Activated T-helper 1 cell treated with anti-CD3 and anti-CD28 coated beads, Interleukin-12 subunit alpha, Interleukin-12 subunit beta, Interleukin-2, Interleukin-4 antibody, amounts not matched to agents 30 ng/mL and 10 ng/mL and 1 ng/mL, durations not matched to agents 14 hours and 24 hours and 36 hours (primary cell): ENCODE measurements at regions of chr2 and their contacts with region 1.

Region 1: DNA sequence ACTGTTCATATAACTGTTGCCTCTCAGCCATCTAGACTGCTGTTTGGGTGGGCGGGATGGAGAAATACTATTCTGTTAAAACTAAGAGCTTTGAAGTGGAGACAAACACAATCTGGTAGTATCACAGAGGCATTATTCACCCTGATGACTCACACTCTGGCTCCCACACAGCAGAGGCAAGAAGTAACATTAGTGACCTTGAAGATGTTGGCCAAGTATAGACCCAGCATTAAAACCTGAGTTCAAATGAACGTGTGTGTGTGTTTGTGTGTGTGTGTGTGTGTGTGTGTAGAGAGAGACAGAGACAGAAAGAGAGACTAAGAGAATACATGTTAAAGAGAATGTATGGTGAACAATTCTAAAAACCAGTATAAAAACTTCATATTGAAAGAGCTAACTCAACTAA is 22.5 kb upstream of the ACVR1 start:
- DNase-seq: peak; percentile 43
- H3K4me3 Mint-ChIP-seq: peak overlapping the region; percentile 82
- H3K27ac Mint-ChIP-seq: peak overlapping the region; percentile 97
- H3K4me1 Mint-ChIP-seq: peaks cover 79% of the 10 kb centered on the region
- H3K27me3 Mint-ChIP-seq: no peaks in the 10 kb centered on the region

Region 2: DNA sequence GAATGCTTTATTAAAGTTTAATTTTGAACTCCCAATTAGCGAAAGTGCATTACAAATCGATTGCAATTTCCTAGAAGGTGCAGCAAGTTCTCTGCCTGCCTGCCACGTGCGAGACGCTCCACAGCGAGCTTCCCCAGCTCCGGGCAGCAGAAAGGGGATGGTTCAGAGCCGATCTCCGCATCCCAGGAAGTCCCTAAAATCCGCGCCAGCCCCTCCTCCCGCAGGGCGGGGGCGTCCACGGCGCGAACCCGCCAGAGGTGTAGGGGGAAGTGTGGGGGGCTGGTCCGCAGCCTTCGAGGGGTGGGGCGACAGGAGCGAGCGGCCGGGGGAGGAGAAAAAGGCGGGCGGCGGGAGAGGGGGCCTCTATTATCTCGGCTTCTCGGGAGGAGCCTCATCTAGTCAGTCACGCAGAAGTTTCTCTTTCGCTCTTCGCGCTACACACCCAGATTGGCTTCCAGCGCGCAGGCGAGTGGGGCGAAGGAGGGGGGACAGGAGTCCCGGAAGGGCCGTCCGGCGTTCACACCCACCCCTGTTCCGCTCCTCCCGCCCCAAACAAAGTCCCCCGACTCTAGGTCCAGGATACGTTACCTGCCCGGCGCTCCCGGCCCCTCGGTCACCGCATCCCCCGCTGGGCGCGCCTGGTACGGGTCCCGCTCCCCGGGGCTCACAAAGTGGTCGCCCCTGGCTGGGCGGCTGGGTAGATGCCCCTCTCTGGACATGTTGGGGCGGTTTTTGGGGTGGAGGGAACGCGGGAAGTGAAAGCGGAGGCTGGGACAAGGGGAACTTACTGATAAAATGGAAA is 1556.9 kb before region 1 on chr2:
- intact Hi-C with region 1: loop called (anchors 2 kb)
- DNase-seq: peak; percentile 85
- H3K4me3 Mint-ChIP-seq: peak overlapping the region; percentile 96
- H3K27ac Mint-ChIP-seq: peak overlapping the region; percentile 99
- H3K4me1 Mint-ChIP-seq: peaks cover 57% of the 10 kb centered on the region
- H3K27me3 Mint-ChIP-seq: no peaks in the 10 kb centered on the region

Region 3: GRCh38 chr2:157327621-157328500 is 570.7 kb before region 1 on chr2:
- intact Hi-C with region 1: loop called (anchors 5 kb)
- DNase-seq: peak; percentile 74
- H3K4me3 Mint-ChIP-seq: peak overlapping the region; percentile 32
- H3K27ac Mint-ChIP-seq: peak overlapping the region; percentile 26
- H3K4me1 Mint-ChIP-seq: peaks cover 38% of the 10 kb centered on the region
- H3K27me3 Mint-ChIP-seq: no peaks in the 10 kb centered on the region

Region 4: GRCh38 chr2:157468931-157469708 is 429.5 kb before region 1 on chr2:
- intact Hi-C with region 1: loop called (anchors 1 kb)
- DNase-seq: no peak
- H3K4me3 Mint-ChIP-seq: peak overlapping the region; percentile 71
- H3K27ac Mint-ChIP-seq: peak overlapping the region; percentile 97
- H3K4me1 Mint-ChIP-seq: peaks cover 90% of the 10 kb centered on the region
- H3K27me3 Mint-ChIP-seq: no peaks in the 10 kb centered on the region

Region 5: DNA sequence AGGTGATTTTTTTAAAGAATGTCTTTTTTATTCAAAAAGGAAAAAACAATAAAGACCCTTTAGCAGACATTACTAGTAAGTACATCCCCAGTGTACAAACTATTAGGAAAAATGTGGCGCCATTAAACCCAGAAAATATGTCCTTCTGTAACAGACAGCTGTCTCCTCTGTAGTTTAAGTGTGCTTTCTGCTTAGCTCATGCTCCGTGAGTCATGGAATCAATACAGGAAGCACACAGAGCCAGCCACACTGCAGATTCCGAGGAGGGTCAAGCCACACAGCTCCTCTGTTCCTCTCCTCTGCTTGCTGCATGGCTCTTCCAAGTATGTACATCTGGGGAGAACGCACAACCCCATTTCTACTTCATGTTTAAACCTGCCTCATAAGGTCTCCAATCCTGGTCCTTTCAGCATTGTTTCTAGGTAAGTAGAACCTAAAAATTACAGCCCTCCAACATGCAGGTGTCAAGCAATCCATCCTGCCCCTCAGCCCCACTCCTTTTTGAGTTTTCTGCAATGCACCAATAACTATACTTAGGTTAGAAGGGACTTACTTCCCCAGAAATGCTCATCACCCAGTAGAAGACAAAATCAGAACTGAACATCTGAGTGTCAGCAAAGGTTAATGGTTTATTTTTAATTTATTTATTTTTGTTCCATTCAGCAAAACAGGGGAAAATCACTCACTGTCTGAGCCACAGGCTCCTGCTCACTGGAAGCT is 60.0 kb before region 1 on chr2:
- intact Hi-C with region 1: loop called (anchors 2 kb)
- DNase-seq: peak; percentile 11
- H3K4me3 Mint-ChIP-seq: peak overlapping the region; percentile 27
- H3K27ac Mint-ChIP-seq: peak overlapping the region; percentile 78
- H3K4me1 Mint-ChIP-seq: peaks cover 60% of the 10 kb centered on the region
- H3K27me3 Mint-ChIP-seq: no peaks in the 10 kb centered on the region

Region 6: DNA sequence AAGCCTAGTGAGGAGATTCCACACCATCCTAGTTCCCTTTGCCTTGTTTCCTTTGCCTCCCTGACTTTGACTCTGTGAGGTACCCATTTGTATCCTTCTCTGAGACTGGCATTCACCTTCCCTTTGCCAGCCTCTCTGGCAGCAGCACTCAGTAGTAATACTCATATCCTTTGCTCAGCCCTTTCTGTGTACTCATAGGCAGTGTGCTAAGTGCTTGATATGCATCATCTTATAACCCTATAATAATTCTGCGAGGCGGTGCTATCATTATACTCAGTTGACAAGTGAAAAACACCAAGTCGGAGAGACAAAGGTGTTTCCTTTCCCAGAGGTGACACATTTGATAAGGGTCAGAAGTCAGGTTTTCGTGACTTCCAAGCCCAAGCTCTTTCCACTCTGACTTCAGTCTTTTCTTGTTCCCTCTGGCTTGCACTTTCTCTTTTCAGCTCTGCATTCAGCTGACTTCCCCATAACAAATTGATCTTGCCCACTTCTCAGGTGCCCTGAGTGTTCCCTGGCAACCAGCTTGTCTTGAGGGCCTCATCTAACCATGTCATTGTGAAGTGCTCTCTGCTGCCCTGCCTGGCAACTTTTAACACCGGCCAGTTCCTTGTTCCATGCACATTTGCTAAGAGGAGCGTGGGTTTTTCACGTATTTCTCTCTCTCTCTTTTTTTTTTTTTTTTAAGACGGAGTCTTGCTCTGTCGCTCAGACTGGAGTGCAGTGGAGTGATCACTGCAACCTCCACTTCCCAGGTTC is 108.5 kb after region 1 on chr2:
- intact Hi-C with region 1: loop called (anchors 1 kb)
- DNase-seq: no peak
- H3K4me3 Mint-ChIP-seq: no peak overlapping the region
- H3K27ac Mint-ChIP-seq: no peak overlapping the region
- H3K4me1 Mint-ChIP-seq: peaks cover 29% of the 10 kb centered on the region
- H3K27me3 Mint-ChIP-seq: no peaks in the 10 kb centered on the region

Region 7: DNA sequence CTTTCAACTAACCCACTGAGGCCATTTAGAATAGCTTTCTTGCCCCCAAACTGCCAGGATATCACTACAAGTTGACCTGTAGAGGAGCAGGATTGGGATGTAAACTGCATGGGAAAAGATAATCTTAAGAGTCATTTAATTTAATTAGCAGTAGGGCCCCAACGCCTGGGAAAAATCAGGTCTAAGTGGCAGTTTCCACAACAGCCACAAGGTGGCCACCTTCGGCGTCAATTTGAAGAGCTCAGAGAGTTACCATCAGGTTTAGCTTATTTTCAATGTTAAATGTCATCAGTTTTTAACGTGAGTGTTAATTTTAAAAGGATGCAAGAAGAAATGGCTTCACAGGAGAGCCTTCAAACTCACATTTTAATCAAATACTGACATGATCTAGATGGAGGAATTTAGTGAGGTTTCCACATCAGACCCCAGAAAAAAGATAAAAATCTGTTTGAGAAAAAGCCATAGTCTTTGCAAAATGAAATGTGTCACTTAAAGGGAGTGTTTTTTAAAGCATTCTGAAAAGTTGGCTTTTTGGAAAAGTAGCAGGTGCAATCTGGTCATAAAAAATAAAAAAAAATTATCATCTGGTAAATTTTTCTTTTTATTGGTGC is 125.8 kb after region 1 on chr2:
- intact Hi-C with region 1: no loop called
- DNase-seq: peak; percentile 34
- H3K4me3 Mint-ChIP-seq: no peak overlapping the region
- H3K27ac Mint-ChIP-seq: no peak overlapping the region
- H3K4me1 Mint-ChIP-seq: peaks cover 14% of the 10 kb centered on the region
- H3K27me3 Mint-ChIP-seq: peaks cover 11% of the 10 kb centered on the region

Region 8: GRCh38 chr2:159879051-159879604 is 1980.5 kb after region 1 on chr2:
- intact Hi-C with region 1: loop called (anchors 5 kb)
- DNase-seq: no peak
- H3K4me3 Mint-ChIP-seq: no peak overlapping the region
- H3K27ac Mint-ChIP-seq: peak overlapping the region; percentile 86
- H3K4me1 Mint-ChIP-seq: peaks cover 32% of the 10 kb centered on the region
- H3K27me3 Mint-ChIP-seq: no peaks in the 10 kb centered on the region